Activated CD4-positive, alpha-beta T cell treated with anti-CD3 and anti-CD28 coated beads for 36 hours (primary cell): ENCODE measurements at regions of chr3 and their contacts with region 1.

Region 1: DNA sequence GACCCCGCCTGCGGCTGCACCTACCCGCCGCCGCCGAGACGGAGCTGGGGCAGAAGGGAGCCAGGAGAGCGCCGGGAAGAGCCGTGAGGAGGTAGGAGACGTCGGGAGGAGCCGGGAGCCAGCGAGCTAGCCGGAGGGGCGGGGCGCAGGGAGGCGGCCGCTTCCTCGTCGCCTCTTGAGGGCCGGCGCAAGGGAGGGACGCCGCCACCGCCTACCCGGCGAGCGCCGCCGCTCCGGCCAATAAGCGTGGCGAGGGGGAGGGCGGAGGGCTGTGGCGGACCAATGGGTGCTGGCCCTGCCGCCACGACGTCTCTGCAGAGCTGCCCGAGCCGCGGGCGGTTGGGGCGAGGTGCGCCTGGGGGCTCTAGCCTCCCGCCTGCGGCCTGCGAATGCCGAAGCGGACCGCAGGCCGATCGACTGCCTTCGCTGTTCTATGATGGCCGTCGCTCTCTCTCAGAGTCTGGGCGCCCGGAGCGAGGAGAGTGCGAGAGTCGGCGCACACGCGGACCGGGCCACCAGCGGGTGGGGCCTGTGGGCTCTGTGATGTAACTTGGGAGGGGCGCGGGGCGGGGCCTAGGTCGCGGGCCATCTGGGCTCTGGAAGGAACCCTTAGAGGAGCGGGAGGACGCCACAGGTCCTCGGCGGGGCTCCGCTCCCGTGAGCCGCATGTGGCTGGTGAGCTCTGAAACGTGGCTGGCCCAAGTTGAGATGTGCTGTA is 72.7 kb upstream of the MAP4 start:
- DNase-seq: peak; percentile 97
- ATAC-seq: peak; percentile 96
- H3K4me3 Mint-ChIP-seq: peak overlapping the region; percentile 97
- H3K27ac Mint-ChIP-seq: peak overlapping the region; percentile 93
- H3K4me1 Mint-ChIP-seq: peaks cover 29% of the 10 kb centered on the region
- H3K27me3 Mint-ChIP-seq: no peaks in the 10 kb centered on the region

Region 2: GRCh38 chr3:47380601-47381316 is 708.1 kb before region 1 on chr3 and contains the start of gene PTPN23:
- CTCF ChIA-PET with region 1: no interaction called
- POLR2A ChIA-PET with region 1: no interaction called
- intact Hi-C with region 1: loop called in 1 of 2 experiments (anchors 2 kb)
- DNase-seq: peak; percentile 99
- ATAC-seq: peak; percentile 81
- H3K4me3 Mint-ChIP-seq: peak within 1 kb of the TSS; percentile 86
- H3K27ac Mint-ChIP-seq: peak within 1 kb of the TSS; percentile 99
- H3K4me1 Mint-ChIP-seq: peaks cover 39% of the 10 kb centered on the region
- H3K27me3 Mint-ChIP-seq: no peaks in the 10 kb centered on the region
- total RNA-seq, gene PTPN23: 25.9 to 29.4 TPM

Region 3: GRCh38 chr3:47578119-47578632 is 510.7 kb before region 1 on chr3:
- CTCF ChIA-PET with region 1: no interaction called
- POLR2A ChIA-PET with region 1: no interaction called
- intact Hi-C with region 1: loop called in 1 of 2 experiments (anchors 1 kb)
- DNase-seq: peak; percentile 61
- ATAC-seq: peak; percentile 75
- H3K4me3 Mint-ChIP-seq: peak overlapping the region; percentile 52
- H3K27ac Mint-ChIP-seq: no peak overlapping the region
- H3K4me1 Mint-ChIP-seq: no peaks in the 10 kb centered on the region
- H3K27me3 Mint-ChIP-seq: peaks cover 18% of the 10 kb centered on the region

Region 4: GRCh38 chr3:47622671-47623461 is 466.0 kb before region 1 on chr3:
- CTCF ChIA-PET with region 1: no interaction called
- POLR2A ChIA-PET with region 1: no interaction called
- intact Hi-C with region 1: no loop called
- DNase-seq: no peak
- ATAC-seq: no peak
- H3K4me3 Mint-ChIP-seq: no peak overlapping the region
- H3K27ac Mint-ChIP-seq: peak overlapping the region; percentile 9
- H3K4me1 Mint-ChIP-seq: no peaks in the 10 kb centered on the region
- H3K27me3 Mint-ChIP-seq: no peaks in the 10 kb centered on the region

Region 5: GRCh38 chr3:47741925-47742324 is 347.0 kb before region 1 on chr3:
- CTCF ChIA-PET with region 1: no interaction called
- POLR2A ChIA-PET with region 1: no interaction called
- intact Hi-C with region 1: no loop called
- DNase-seq: no peak
- ATAC-seq: no peak
- H3K4me3 Mint-ChIP-seq: no peak overlapping the region
- H3K27ac Mint-ChIP-seq: no peak overlapping the region
- H3K4me1 Mint-ChIP-seq: peaks cover 13% of the 10 kb centered on the region
- H3K27me3 Mint-ChIP-seq: no peaks in the 10 kb centered on the region

Region 6: GRCh38 chr3:48188266-48189201 is 99.6 kb after region 1 on chr3 and contains the start of gene CDC25A:
- CTCF ChIA-PET with region 1: no interaction called
- POLR2A ChIA-PET with region 1: interaction called, 5 read pairs
- intact Hi-C with region 1: loop called (anchors 1 kb)
- DNase-seq: peak; percentile 98
- ATAC-seq: peak; percentile 99
- H3K4me3 Mint-ChIP-seq: peak within 1 kb of the TSS; percentile 96
- H3K27ac Mint-ChIP-seq: peak within 1 kb of the TSS; percentile 79
- H3K4me1 Mint-ChIP-seq: peaks cover 15% of the 10 kb centered on the region
- H3K27me3 Mint-ChIP-seq: peaks cover 7% of the 10 kb centered on the region
- total RNA-seq, gene CDC25A: 32.5 to 33.9 TPM

Region 7: DNA sequence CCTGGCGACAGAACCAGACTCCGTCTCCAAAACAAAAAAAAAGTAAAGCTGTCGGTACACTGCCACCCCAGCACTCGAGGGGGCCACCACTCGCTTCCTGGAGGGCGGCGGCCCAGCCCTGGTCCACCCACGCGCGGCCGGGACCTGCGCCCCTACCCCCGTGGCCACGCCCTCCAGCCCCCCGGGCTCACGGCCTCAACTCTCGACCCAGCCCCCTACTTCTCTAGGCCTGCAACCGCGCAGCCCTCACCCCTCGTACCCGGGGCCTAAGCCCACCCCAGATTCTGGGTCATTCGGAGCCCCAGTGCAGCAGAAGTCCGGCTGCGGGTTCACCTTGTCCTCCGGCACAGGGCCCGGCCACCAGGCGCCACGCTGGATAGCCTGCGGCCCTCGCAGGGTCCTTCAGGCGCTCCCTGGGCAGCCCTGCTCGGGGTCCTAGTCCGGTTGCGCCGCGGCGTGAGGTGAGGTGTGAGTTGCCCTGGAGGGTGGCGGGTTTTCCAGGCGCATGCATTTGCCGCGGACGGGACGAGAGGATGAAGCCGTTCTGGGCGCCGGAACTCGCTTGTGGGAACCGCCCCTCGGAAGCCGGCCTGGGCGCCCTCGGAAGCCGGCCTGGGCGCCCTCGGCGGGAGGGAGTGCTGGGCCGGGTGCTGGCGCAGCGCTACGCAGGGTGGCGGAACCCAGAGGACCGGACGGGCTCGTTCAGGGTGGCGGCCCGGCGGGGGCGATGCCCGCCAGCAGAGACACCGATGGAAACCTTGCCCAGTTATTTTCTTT is 212.3 kb after region 1 on chr3:
- CTCF ChIA-PET with region 1: no interaction called
- POLR2A ChIA-PET with region 1: no interaction called
- intact Hi-C with region 1: loop called in 1 of 2 experiments (anchors 1 kb)
- DNase-seq: peak; percentile 97
- ATAC-seq: peak; percentile 85
- H3K4me3 Mint-ChIP-seq: peak within 1 kb of the TSS; percentile 92
- H3K27ac Mint-ChIP-seq: peak within 1 kb of the TSS; percentile 98
- H3K4me1 Mint-ChIP-seq: peaks cover 27% of the 10 kb centered on the region
- H3K27me3 Mint-ChIP-seq: no peaks in the 10 kb centered on the region

Region 8: GRCh38 chr3:48847504-48848423 is 758.9 kb after region 1 on chr3 and contains the start of gene PRKAR2A:
- CTCF ChIA-PET with region 1: no interaction called
- POLR2A ChIA-PET with region 1: no interaction called
- intact Hi-C with region 1: loop called in 1 of 2 experiments (anchors 2 kb)
- DNase-seq: peak; percentile 89
- ATAC-seq: peak; percentile 89
- H3K4me3 Mint-ChIP-seq: peak within 1 kb of the TSS; percentile 82
- H3K27ac Mint-ChIP-seq: peak within 1 kb of the TSS; percentile 87
- H3K4me1 Mint-ChIP-seq: peaks cover 26% of the 10 kb centered on the region
- H3K27me3 Mint-ChIP-seq: no peaks in the 10 kb centered on the region
- total RNA-seq, gene PRKAR2A: 28.7 to 35.2 TPM

Region 9: GRCh38 chr3:49428697-49429100 is 1339.8 kb after region 1 on chr3:
- CTCF ChIA-PET with region 1: no interaction called
- POLR2A ChIA-PET with region 1: no interaction called
- intact Hi-C with region 1: loop called in 1 of 2 experiments (anchors 5 kb)
- DNase-seq: no peak
- ATAC-seq: peak; percentile 2
- H3K4me3 Mint-ChIP-seq: peak overlapping the region; percentile 84
- H3K27ac Mint-ChIP-seq: peak overlapping the region; percentile 93
- H3K4me1 Mint-ChIP-seq: peaks cover 16% of the 10 kb centered on the region
- H3K27me3 Mint-ChIP-seq: no peaks in the 10 kb centered on the region